ENCODE measurements at regions of chr12 and their contacts with region 1.

Region 1: GRCh38 chr12:7647071-7647470 is 18.6 kb downstream of the APOBEC1 start:
- DNase-seq: no peak
- H3K4me3 Mint-ChIP-seq: no peak overlapping the region
- H3K27ac Mint-ChIP-seq: no peak overlapping the region
- H3K4me1 Mint-ChIP-seq: no peaks in the 10 kb centered on the region
- H3K27me3 Mint-ChIP-seq: no peaks in the 10 kb centered on the region
- CTCF ChIP-seq: no peak

Region 2: GRCh38 chr12:7612851-7613250 is 34.2 kb before region 1 on chr12:
- CTCF ChIA-PET with region 1: interaction called, 15 read pairs
- POLR2A ChIA-PET with region 1: no interaction called
- intact Hi-C with region 1: no loop called
- DNase-seq: no peak
- H3K4me3 Mint-ChIP-seq: no peak overlapping the region
- H3K27ac Mint-ChIP-seq: no peak overlapping the region
- H3K4me1 Mint-ChIP-seq: peaks cover 9% of the 10 kb centered on the region
- H3K27me3 Mint-ChIP-seq: peaks cover 18% of the 10 kb centered on the region
- CTCF ChIP-seq: no peak

Region 3: DNA sequence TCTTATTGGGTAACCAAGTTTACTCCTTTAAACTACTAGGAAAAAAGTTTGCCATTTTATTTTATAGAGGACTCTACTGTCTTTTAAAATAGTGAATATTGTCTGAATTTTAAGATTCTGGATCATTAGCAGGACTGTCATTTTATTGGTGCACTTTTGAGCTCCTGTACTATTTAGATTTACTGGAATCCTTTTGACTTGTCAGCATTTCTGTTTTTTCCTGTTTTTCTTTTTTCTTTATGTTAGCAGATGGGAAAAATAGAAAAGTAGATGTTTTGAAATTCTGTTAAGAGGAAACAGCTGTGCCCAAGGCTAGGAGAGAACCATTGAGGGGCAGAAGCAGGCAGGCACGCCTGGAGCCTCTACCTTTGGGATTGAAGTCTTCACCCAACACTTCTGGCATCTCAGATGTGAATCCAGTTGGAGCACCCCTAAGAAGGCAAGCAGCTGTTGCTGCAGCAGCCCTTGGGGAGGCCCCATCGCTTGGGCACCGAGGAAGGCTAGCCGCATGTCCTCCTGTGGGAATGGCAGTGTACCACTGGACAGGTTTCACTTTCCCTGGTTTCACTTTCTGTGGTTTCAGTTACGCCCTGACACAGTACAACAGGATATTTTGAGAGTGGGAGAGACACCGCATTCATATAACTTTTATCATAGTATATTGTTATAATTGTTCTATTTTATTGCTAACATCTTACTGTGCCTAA is 1062.2 kb after region 1 on chr12:
- CTCF ChIA-PET with region 1: no interaction called
- POLR2A ChIA-PET with region 1: no interaction called
- intact Hi-C with region 1: no loop called
- DNase-seq: no peak
- H3K4me3 Mint-ChIP-seq: peak overlapping the region; percentile 52
- H3K27ac Mint-ChIP-seq: peak overlapping the region; percentile 27
- H3K4me1 Mint-ChIP-seq: no peaks in the 10 kb centered on the region
- H3K27me3 Mint-ChIP-seq: no peaks in the 10 kb centered on the region
- CTCF ChIP-seq: no peak

Measured in MCF 10A (cell line).